ENCODE measurements at regions of chr19 and their contacts with region 1.

Region 1: DNA sequence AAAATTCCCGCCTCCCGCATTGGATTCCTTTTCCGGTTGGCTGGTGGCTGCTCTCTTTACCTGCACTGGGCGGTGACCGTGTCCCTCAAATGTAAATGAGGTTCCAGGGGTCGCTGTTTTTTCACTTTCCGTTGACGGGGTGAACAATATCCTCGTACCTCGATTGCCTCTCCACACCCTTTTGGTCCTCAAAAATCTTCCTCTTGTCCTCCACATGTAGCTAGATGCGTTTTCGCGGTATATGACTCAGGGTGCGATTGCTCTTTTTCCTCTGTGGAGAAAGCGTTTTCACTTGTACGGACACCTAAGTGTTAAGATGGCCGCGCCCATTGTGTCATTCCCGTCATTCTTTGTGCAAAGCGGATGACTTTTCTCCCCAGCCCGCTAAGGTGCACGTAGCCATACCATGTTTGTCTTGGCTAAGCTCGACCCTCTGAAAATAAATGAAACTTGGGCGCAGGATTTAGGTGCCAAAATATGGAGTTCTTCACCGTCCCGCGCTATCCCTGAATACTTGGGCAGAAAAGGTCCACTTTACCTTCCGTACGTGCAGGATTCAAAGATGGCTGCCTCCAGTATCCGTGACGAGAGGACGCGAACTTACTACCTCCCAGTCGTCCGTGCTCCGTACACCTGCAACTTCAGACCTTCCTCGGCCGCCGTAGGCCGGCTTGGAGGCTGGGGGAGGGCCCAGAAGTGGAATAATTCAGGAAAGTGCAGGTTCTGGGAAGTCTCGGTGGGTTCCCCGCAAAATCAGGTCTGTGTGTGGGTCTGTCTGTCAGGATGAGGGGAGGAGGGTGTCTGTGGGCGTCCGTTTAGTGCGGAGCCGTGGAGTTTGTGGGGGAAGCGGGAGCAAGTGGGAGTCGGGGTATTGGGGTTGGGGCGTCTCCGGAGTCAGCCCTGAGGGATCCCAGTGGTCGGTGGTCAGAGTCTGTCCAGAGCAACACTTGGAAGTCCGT is at the start of gene ZNF613:
- DNase-seq: peak; percentile 81 to 89 (median 85)
- H3K4me3 ChIP-seq: peak within 1 kb of the TSS; percentile 85 to 91
- H3K4me3 Mint-ChIP-seq: peak within 1 kb of the TSS; percentile 93 to 99 (median 98)
- H3K27ac ChIP-seq: peak within 1 kb of the TSS; percentile 55
- H3K27ac Mint-ChIP-seq: peak within 1 kb of the TSS; percentile 82 to 97 (median 95)
- H3K4me1 ChIP-seq: peaks cover 11% of the 10 kb centered on the region
- H3K4me1 Mint-ChIP-seq: peaks cover 16 to 38% (median 24%) of the 10 kb centered on the region in 4 donors
- H3K27me3 ChIP-seq: no peaks in the 10 kb centered on the region
- H3K27me3 Mint-ChIP-seq: peaks cover 0 to 2% of the 10 kb centered on the region in 2 donors
- total RNA-seq, gene ZNF613: 8.0 to 8.9 TPM

Region 2: GRCh38 chr19:51593969-51594773 is 332.9 kb before region 1 on chr19:
- CTCF ChIA-PET with region 1: no interaction called
- POLR2A ChIA-PET with region 1: no interaction called
- intact Hi-C with region 1: no loop called
- DNase-seq: peak; percentile 92 to 94 (median 93)
- H3K4me3 ChIP-seq: peak overlapping the region; percentile 91 to 93
- H3K4me3 Mint-ChIP-seq: peak overlapping the region; percentile 85 to 100 (median 96)
- H3K27ac ChIP-seq: peak overlapping the region; percentile 58
- H3K27ac Mint-ChIP-seq: peak overlapping the region; percentile 33 to 97 (median 93)
- H3K4me1 ChIP-seq: peaks cover 16% of the 10 kb centered on the region
- H3K4me1 Mint-ChIP-seq: peaks cover 16 to 25% (median 22%) of the 10 kb centered on the region in 4 donors
- H3K27me3 ChIP-seq: no peaks in the 10 kb centered on the region
- H3K27me3 Mint-ChIP-seq: peaks cover 2 to 11% of the 10 kb centered on the region in 2 donors

Region 3: DNA sequence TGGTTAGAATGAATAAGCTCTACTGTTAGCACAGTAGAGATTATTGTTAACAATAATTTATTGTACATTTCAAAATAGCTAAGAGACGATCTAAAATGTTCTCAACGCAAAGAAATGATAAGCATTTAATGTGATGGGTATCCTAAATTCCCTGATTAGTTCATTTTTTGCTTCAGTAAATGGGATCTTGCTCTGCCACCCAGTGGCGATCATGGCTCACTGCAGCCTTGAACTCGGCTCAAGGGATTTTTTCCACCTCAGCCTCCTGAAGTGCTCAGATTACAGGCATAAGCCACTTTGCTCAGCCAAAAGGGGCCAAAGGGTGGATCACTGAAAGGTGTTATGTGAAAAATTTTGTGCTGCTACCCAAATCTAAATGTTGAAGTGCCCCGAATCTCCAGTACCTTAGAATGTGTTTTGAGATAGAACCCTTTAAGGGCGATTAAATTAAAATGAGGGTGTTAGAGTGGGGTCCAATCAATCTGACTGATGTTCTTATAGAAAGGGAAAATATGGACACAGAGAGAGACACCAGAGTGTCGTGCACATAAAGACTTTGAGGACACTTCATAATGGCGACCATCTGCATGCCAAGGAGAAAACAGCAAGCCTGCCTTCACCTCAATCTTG is 310.8 kb after region 1 on chr19:
- CTCF ChIA-PET with region 1: no interaction called
- POLR2A ChIA-PET with region 1: no interaction called
- intact Hi-C with region 1: loop called (anchors 5 kb)
- DNase-seq: peak; percentile 47 to 55 (median 51)
- H3K4me3 ChIP-seq: no peak overlapping the region
- H3K4me3 Mint-ChIP-seq: no peak overlapping the region
- H3K27ac ChIP-seq: no peak overlapping the region
- H3K27ac Mint-ChIP-seq: peak overlapping the region in 2 of 7 donors; percentile 1 to 46
- H3K4me1 ChIP-seq: no peaks in the 10 kb centered on the region
- H3K4me1 Mint-ChIP-seq: peaks cover 0 to 3% (median 0%) of the 10 kb centered on the region in 4 donors
- H3K27me3 ChIP-seq: no peaks in the 10 kb centered on the region
- H3K27me3 Mint-ChIP-seq: no peaks in the 10 kb centered on the region